Heart left ventricle (tissue), 16 donors: ENCODE measurements at regions of chr4 and their contacts with region 1.

Region 1: GRCh38 chr4:88503344-88503743 is 20.2 kb downstream of the PYURF start:
- DNase-seq: no peak
- ATAC-seq: no peak
- H3K4me3 ChIP-seq: no peak overlapping the region
- H3K27ac ChIP-seq: no peak overlapping the region
- H3K4me1 ChIP-seq: no peaks in the 10 kb centered on the region
- H3K27me3 ChIP-seq: no peaks in the 10 kb centered on the region
- CTCF ChIP-seq: no peak
- POLR2A ChIP-seq: no peak

Region 2: DNA sequence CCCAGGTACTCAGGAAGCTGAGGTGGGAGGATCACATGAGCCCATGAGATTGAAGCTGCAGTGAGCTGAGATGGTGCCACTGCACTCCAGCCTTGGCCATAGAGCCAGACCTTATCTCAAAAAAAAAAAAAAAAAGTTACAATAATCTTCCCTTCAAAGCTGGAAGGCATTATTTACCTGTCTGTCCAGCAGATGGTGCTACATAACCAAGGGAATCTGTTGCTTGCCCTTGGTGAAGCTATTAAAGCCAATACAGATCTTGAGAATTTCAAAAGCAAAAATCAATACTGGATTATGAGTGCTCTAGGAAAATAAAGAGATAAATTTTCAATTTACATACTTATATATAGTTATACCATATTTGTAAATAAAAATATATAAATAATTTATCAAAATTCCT is 470.0 kb before region 1 on chr4:
- intact Hi-C with region 1: loop called in 1 of 10 experiments (anchors 10 kb)
- DNase-seq: peak in 2 of 5 donors; percentile 25 to 28
- ATAC-seq: peak in 3 of 4 donors; percentile 48 to 62 (median 62)
- H3K4me3 ChIP-seq: no peak overlapping the region
- H3K27ac ChIP-seq: no peak overlapping the region
- H3K4me1 ChIP-seq: peaks cover 0 to 11% (median 0%) of the 10 kb centered on the region in 12 donors
- H3K27me3 ChIP-seq: no peaks in the 10 kb centered on the region
- CTCF ChIP-seq: peak; percentile 54 to 76 (median 67)
- POLR2A ChIP-seq: no peak

Region 3: GRCh38 chr4:88352062-88352740 is 151.1 kb before region 1 on chr4:
- intact Hi-C with region 1: no loop called
- DNase-seq: no peak
- ATAC-seq: peak in 1 of 4 donors; percentile 31
- H3K4me3 ChIP-seq: no peak overlapping the region
- H3K27ac ChIP-seq: no peak overlapping the region
- H3K4me1 ChIP-seq: peaks cover 0 to 11% (median 0%) of the 10 kb centered on the region in 12 donors
- H3K27me3 ChIP-seq: no peaks in the 10 kb centered on the region
- CTCF ChIP-seq: no peak
- POLR2A ChIP-seq: no peak